ENCODE measurements at regions of chr4 and their contacts with region 1.

Region 1: GRCh38 chr4:118278473-118279274 is 74.1 kb downstream of the PRSS12 start:
- H3K4me3 Mint-ChIP-seq: peak overlapping the region; percentile 93
- H3K27ac Mint-ChIP-seq: peak overlapping the region; percentile 99
- H3K4me1 Mint-ChIP-seq: peaks cover 47% of the 10 kb centered on the region
- H3K27me3 Mint-ChIP-seq: no peaks in the 10 kb centered on the region

Region 2: DNA sequence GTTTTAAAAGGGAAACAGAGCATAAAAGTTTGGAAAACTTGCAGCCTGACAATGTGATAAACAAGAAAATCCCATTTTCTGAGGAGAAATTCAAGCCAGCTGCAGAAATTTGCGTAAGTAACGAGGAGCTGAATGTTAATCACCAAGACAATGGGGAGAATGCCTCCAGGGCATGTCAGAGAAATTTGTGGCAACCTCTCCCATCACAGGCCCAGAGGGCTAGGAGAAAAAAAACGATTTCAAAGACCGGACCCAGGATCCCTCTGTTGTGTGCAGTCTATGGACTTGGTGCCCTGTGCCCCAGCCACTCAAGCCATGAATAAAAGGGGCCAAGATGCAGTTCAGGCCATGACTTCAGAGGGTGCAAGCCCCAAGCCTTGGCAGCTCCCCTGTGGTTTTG is 599.8 kb before region 1 on chr4:
- intact Hi-C with region 1: no loop called
- H3K4me3 Mint-ChIP-seq: no peak overlapping the region
- H3K27ac Mint-ChIP-seq: no peak overlapping the region
- H3K4me1 Mint-ChIP-seq: no peaks in the 10 kb centered on the region
- H3K27me3 Mint-ChIP-seq: no peaks in the 10 kb centered on the region

Region 3: DNA sequence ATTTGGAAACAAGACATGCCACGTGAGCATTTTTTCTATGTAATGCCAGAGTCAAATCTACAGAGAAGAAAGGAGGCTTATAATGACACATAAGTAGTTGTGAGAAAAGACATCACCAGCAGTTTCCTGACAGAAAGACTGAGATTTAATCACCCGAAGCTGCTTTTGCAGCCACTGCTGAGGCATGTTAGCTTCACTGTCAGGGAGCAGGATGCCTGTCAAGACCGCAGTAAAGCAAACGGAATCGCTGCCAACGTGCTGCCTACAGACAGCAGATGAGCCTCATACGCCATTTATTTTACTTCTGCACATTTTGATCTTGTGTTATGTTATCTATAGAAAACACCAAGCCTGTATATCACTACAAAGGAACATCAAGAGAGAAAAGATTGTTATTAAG is 313.1 kb before region 1 on chr4:
- intact Hi-C with region 1: no loop called
- H3K4me3 Mint-ChIP-seq: no peak overlapping the region
- H3K27ac Mint-ChIP-seq: no peak overlapping the region
- H3K4me1 Mint-ChIP-seq: peaks cover 6% of the 10 kb centered on the region
- H3K27me3 Mint-ChIP-seq: no peaks in the 10 kb centered on the region

Region 4: GRCh38 chr4:118124997-118125396 is 153.7 kb before region 1 on chr4:
- intact Hi-C with region 1: no loop called
- H3K4me3 Mint-ChIP-seq: no peak overlapping the region
- H3K27ac Mint-ChIP-seq: no peak overlapping the region
- H3K4me1 Mint-ChIP-seq: no peaks in the 10 kb centered on the region
- H3K27me3 Mint-ChIP-seq: no peaks in the 10 kb centered on the region

Region 5: DNA sequence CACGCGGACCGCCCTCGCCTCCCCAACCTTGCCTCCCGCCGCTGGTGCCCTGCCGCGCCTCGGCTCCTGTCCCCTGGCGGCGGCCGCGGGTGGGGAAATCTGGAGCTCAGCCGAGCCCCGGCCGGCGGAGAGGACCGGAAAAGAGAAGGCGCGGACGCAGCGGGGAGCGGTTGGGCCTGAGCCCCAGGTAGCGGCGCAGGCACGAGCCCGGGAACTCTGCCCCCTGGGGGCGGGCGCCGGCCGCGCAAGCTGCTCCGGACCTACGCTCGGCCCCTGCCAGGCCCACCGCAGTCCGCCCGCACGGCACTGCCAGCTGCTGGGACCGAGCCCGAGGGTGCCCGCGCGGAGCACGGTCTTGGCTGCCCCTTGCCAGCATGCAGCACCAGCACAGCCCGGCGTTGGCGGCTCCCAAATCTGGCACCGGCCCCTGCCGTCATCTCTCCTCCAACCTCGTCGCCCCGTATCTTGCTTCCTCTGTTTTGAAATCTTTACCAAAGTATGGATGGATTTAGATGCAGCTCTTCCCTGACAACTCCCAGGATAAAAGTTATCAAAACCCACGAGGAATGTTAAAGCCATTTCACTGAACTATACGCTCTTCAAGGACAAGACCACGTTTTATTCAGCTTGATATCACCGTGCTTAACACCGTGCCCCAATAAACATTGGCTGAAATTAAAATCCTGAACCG is 74.3 kb after region 1 on chr4 and contains the start of gene PRSS12:
- intact Hi-C with region 1: loop called (anchors 5 kb)
- H3K4me3 Mint-ChIP-seq: peak within 1 kb of the TSS; percentile 65
- H3K27ac Mint-ChIP-seq: no peak within 1 kb of the TSS
- H3K4me1 Mint-ChIP-seq: peaks cover 14% of the 10 kb centered on the region
- H3K27me3 Mint-ChIP-seq: peaks cover 72% of the 10 kb centered on the region

Measured in dendritic cell treated with granulocyte-macrophage colony-stimulating factor and Interleukin-4, amounts not matched to agents 40 ng/mL and 50 ng/mL, for 4 days (primary cell).